Mammary epithelial cell (primary cell): ENCODE measurements at regions of chr6 and their contacts with region 1.

Region 1: DNA sequence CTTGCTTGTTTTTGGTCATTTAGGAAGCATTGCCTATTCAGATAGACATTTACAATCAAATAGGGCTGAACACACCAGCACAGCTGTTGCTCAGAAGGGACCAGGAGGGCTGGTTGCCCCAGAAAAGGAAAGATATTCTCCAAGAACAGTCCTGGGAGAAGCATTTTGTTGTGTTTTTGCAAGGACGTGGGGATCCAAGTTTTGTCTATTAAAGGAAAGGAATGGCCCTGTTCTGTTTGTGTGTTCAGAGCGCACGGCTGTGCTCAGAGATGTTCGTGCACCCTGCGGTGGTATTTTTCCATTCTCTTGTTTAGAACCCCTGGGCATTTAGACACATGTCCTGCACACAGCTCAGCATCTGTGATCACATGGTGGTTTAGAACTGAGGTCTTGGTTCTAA is 82.5 kb downstream of the TXNDC5 start:
- DNase-seq: no peak
- H3K4me3 ChIP-seq: no peak overlapping the region
- H3K27ac ChIP-seq: no peak overlapping the region
- H3K4me1 ChIP-seq: no peaks in the 10 kb centered on the region
- H3K27me3 ChIP-seq: no peaks in the 10 kb centered on the region
- CTCF ChIP-seq: no peak

Region 2: DNA sequence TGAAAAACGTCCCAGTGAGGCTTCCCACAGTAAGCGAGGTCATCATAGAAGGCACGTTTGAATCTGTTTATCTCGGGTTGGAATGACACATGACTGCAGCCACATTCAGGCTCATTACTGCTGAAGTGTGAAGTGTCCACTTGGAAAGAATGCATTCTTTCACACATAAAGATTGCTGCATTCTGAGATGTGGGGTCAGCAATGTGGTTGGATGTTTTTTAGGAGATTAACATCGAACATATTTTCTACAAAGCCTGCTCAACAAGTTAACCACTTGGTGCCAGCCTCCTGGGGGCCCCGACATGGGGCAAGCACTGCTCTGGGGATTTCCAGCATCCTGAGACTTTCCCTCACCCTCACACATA is 22.3 kb before region 1 on chr6:
- CTCF ChIA-PET with region 1: no interaction called
- dilution Hi-C with region 1: no loop called
- in situ Hi-C with region 1: no loop called
- intact Hi-C with region 1: loop called (anchors 2 kb)
- DNase-seq: peak; percentile 2
- H3K4me3 ChIP-seq: no peak overlapping the region
- H3K27ac ChIP-seq: no peak overlapping the region
- H3K4me1 ChIP-seq: no peaks in the 10 kb centered on the region
- H3K27me3 ChIP-seq: peaks cover 2% of the 10 kb centered on the region
- CTCF ChIP-seq: no peak